Cardiac septum (tissue), 1 donor: ENCODE measurements at regions of chr1 and their contacts with region 1.

Region 1: GRCh38 chr1:201941420-201942128 is 4.8 kb downstream of the LMOD1 start:
- DNase-seq: no peak

Region 2: GRCh38 chr1:201792534-201793305 is 148.9 kb before region 1 on chr1:
- intact Hi-C with region 1: no loop called
- DNase-seq: peak; percentile 83

Region 3: DNA sequence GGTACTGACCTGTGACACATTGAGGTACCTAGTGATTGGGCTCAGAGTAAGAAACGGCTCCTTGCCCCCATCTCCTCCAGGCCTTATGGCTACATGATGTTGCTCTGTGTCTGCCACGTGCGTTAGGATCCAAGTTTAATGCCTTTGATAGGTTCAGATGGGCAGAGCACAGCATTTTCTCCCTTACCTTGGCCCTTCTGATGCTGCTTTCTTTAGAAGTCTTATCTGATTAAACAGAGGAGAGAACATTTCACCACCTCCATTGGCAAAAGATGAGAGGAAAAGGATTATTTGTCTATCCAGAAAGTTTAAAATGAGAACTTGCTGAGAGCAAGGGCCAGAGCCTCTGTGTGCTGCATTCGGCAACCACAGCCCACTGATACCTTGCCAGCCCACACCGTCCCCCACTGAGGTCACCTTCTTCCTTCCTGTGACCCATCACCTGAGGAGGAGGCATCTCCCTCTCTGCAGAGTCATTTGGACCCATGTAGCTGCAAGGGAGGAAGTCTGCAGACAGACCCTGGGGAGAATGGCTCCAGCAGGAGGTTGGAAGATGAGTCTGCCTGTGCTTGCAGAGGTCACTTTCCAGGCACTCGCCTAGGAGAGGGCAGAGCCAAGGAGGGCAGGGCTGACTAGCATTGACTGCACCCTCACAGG is 36.2 kb before region 1 on chr1:
- intact Hi-C with region 1: loop called (anchors 5 kb)
- DNase-seq: no peak